B cell (primary cell): ENCODE measurements at regions of chr17 and their contacts with region 1.

Region 1: GRCh38 chr17:44210342-44211192 is 8.9 kb downstream of the UBTF start:
- DNase-seq: peak; percentile 93
- ATAC-seq: peak; percentile 98
- H3K4me3 ChIP-seq: no peak overlapping the region
- H3K4me3 Mint-ChIP-seq: peak overlapping the region; percentile 34
- H3K27ac ChIP-seq: peak overlapping the region; percentile 41 to 71
- H3K27ac Mint-ChIP-seq: peak overlapping the region; percentile 74
- H3K4me1 ChIP-seq: peaks cover 29 to 49% of the 10 kb centered on the region in 2 donors
- H3K4me1 Mint-ChIP-seq: peaks cover 46% of the 10 kb centered on the region
- H3K27me3 ChIP-seq: no peaks in the 10 kb centered on the region
- H3K27me3 Mint-ChIP-seq: no peaks in the 10 kb centered on the region
- CTCF ChIP-seq: peak; percentile 99

Region 2: GRCh38 chr17:44123356-44124117 is 87.0 kb before region 1 on chr17 and contains the start of gene HDAC5:
- CTCF ChIA-PET with region 1: interaction called, 10 read pairs
- POLR2A ChIA-PET with region 1: no interaction called
- intact Hi-C with region 1: no loop called
- DNase-seq: peak; percentile 95
- ATAC-seq: peak; percentile 97
- H3K4me3 ChIP-seq: peak within 1 kb of the TSS; percentile 71 to 98 (median 85)
- H3K4me3 Mint-ChIP-seq: peak within 1 kb of the TSS; percentile 95
- H3K27ac ChIP-seq: peak within 1 kb of the TSS; percentile 43 to 90
- H3K27ac Mint-ChIP-seq: peak within 1 kb of the TSS; percentile 99
- H3K4me1 ChIP-seq: peaks cover 18 to 26% of the 10 kb centered on the region in 2 donors
- H3K4me1 Mint-ChIP-seq: peaks cover 45% of the 10 kb centered on the region
- H3K27me3 ChIP-seq: no peaks in the 10 kb centered on the region
- H3K27me3 Mint-ChIP-seq: no peaks in the 10 kb centered on the region
- CTCF ChIP-seq: peak; percentile 76
- total RNA-seq, gene HDAC5: 104 and 113 TPM in 2 replicates

Region 3: GRCh38 chr17:44199553-44200477 is 10.8 kb before region 1 on chr17 and contains the start of gene ATXN7L3:
- CTCF ChIA-PET with region 1: interaction called, 44 read pairs
- POLR2A ChIA-PET with region 1: interaction called, 100 read pairs
- intact Hi-C with region 1: loop called (anchors 1 kb)
- DNase-seq: peak; percentile 100
- ATAC-seq: peak; percentile 81
- H3K4me3 ChIP-seq: peak within 1 kb of the TSS; percentile 66 to 83 (median 81)
- H3K4me3 Mint-ChIP-seq: peak within 1 kb of the TSS; percentile 88
- H3K27ac ChIP-seq: peak within 1 kb of the TSS; percentile 89 to 90
- H3K27ac Mint-ChIP-seq: peak within 1 kb of the TSS; percentile 95
- H3K4me1 ChIP-seq: peaks cover 30 to 43% of the 10 kb centered on the region in 2 donors
- H3K4me1 Mint-ChIP-seq: peaks cover 46% of the 10 kb centered on the region
- H3K27me3 ChIP-seq: no peaks in the 10 kb centered on the region
- H3K27me3 Mint-ChIP-seq: no peaks in the 10 kb centered on the region
- CTCF ChIP-seq: no peak
- total RNA-seq, gene ATXN7L3: 107 and 119 TPM in 2 replicates

Region 4: GRCh38 chr17:44253006-44253405 is 42.4 kb after region 1 on chr17:
- CTCF ChIA-PET with region 1: no interaction called
- POLR2A ChIA-PET with region 1: no interaction called
- intact Hi-C with region 1: no loop called
- DNase-seq: no peak
- ATAC-seq: no peak
- H3K4me3 ChIP-seq: no peak overlapping the region
- H3K4me3 Mint-ChIP-seq: no peak overlapping the region
- H3K27ac ChIP-seq: no peak overlapping the region
- H3K27ac Mint-ChIP-seq: no peak overlapping the region
- H3K4me1 ChIP-seq: peaks cover 6 to 12% of the 10 kb centered on the region in 2 donors
- H3K4me1 Mint-ChIP-seq: peaks cover 9% of the 10 kb centered on the region
- H3K27me3 ChIP-seq: peaks cover 0 to 3% (median 0%) of the 10 kb centered on the region in 4 experiments
- H3K27me3 Mint-ChIP-seq: peaks cover 6% of the 10 kb centered on the region
- CTCF ChIP-seq: no peak

Region 5: DNA sequence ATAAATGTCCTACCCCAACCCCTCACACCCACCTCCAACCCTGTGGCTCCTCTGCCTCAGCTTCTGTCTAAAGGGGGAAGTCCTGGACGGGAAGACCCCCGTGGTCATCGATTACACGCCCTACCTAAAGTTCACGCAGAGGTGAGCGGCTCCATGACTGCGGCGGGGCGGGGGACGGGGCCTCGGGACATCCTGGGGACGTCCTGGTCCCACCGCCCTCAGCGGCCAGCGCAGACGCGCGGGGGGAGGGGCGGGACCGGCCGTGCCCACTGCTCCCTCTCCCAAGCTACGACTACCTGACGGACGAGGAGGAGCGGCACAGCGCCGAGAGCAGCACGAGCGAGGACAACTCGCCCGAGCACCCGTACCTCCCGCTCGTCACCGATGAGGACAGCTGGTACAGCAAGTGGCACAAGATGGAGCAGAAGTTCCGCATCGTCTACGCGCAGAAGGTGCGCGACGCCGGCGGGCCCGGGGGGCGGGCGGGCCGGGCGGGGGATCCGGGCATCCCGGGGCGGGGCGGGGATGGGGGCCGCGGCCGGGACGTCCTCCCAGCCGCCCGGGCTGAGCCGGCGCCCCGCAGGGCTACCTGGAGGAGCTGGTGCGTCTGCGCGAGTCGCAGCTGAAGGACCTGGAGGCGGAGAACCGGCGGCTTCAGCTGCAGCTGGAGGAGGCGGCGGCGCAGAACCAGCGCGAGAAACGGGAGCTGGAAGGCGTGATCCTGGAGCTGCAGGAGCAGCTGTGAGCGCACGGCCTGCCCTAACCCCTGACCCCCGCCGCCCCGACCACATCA is 104.5 kb after region 1 on chr17:
- CTCF ChIA-PET with region 1: interaction called, 38 read pairs
- POLR2A ChIA-PET with region 1: no interaction called
- intact Hi-C with region 1: no loop called
- DNase-seq: peak; percentile 55
- ATAC-seq: peak; percentile 59
- H3K4me3 ChIP-seq: peak overlapping the region in 4 of 5 experiments; percentile 28 to 62 (median 50)
- H3K4me3 Mint-ChIP-seq: peak overlapping the region; percentile 80
- H3K27ac ChIP-seq: no peak overlapping the region
- H3K27ac Mint-ChIP-seq: peak overlapping the region; percentile 34
- H3K4me1 ChIP-seq: peaks cover 19 to 25% of the 10 kb centered on the region in 2 donors
- H3K4me1 Mint-ChIP-seq: peaks cover 18% of the 10 kb centered on the region
- H3K27me3 ChIP-seq: peaks cover 0 to 46% (median 22%) of the 10 kb centered on the region in 4 experiments
- H3K27me3 Mint-ChIP-seq: peaks cover 37% of the 10 kb centered on the region
- CTCF ChIP-seq: no peak

Region 6: DNA sequence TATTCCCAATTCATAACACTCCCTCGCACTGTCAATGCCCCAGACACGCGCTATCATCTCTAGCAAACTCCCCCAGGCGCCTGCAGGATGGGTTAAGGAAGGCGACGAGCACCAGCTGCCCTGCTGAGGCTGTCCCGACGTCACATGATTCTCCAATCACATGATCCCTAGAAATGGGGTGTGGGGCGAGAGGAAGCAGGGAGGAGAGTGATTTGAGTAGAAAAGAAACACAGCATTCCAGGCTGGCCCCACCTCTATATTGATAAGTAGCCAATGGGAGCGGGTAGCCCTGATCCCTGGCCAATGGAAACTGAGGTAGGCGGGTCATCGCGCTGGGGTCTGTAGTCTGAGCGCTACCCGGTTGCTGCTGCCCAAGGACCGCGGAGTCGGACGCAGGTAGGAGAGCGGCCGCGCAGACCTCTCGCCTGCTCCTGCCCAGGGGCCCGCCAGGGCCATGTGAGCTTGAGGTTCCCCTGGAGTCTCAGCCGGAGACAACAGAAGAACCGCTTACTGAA is 134.4 kb after region 1 on chr17 and contains the start of gene GRN:
- CTCF ChIA-PET with region 1: interaction called, 98 read pairs
- POLR2A ChIA-PET with region 1: interaction called, 10 read pairs
- intact Hi-C with region 1: loop called (anchors 1 kb)
- DNase-seq: peak; percentile 91
- ATAC-seq: peak; percentile 76
- H3K4me3 ChIP-seq: peak within 1 kb of the TSS; percentile 61 to 94 (median 91)
- H3K4me3 Mint-ChIP-seq: peak within 1 kb of the TSS; percentile 96
- H3K27ac ChIP-seq: peak within 1 kb of the TSS; percentile 85 to 89
- H3K27ac Mint-ChIP-seq: peak within 1 kb of the TSS; percentile 90
- H3K4me1 ChIP-seq: peaks cover 37 to 52% of the 10 kb centered on the region in 2 donors
- H3K4me1 Mint-ChIP-seq: peaks cover 45% of the 10 kb centered on the region
- H3K27me3 ChIP-seq: no peaks in the 10 kb centered on the region
- H3K27me3 Mint-ChIP-seq: no peaks in the 10 kb centered on the region
- CTCF ChIP-seq: no peak
- total RNA-seq, gene GRN: 185 and 187 TPM in 2 replicates

Region 7: GRCh38 chr17:44350733-44351226 is 140.2 kb after region 1 on chr17:
- CTCF ChIA-PET with region 1: interaction called, 98 read pairs
- POLR2A ChIA-PET with region 1: interaction called, 10 read pairs
- intact Hi-C with region 1: loop called (anchors 1 kb)
- DNase-seq: peak; percentile 83
- ATAC-seq: peak; percentile 41
- H3K4me3 ChIP-seq: no peak overlapping the region
- H3K4me3 Mint-ChIP-seq: peak overlapping the region; percentile 35
- H3K27ac ChIP-seq: no peak overlapping the region
- H3K27ac Mint-ChIP-seq: peak overlapping the region; percentile 58
- H3K4me1 ChIP-seq: peaks cover 40 to 46% of the 10 kb centered on the region in 2 donors
- H3K4me1 Mint-ChIP-seq: peaks cover 38% of the 10 kb centered on the region
- H3K27me3 ChIP-seq: no peaks in the 10 kb centered on the region
- H3K27me3 Mint-ChIP-seq: no peaks in the 10 kb centered on the region
- CTCF ChIP-seq: peak; percentile 85

Region 8: DNA sequence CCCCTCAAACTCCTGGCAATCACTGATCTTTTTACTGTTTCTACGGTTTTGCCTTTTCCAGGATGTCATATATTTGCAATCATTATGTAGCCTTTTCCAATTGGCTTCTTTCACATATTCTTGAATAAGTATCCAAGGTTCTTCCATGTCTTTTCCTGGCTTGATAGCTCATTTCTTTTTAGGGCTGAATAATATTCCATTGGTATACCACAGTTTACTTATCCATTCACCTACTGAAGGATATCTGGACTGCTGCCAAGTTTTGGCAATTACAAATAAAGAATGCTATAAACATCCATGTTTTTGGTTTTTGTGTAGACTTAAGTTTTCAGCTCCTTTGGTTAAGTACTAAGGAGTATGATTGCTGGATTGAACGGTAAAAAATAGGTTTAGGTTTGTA is 276.6 kb after region 1 on chr17:
- CTCF ChIA-PET with region 1: no interaction called
- POLR2A ChIA-PET with region 1: no interaction called
- intact Hi-C with region 1: no loop called
- DNase-seq: no peak
- ATAC-seq: no peak
- H3K4me3 ChIP-seq: no peak overlapping the region
- H3K4me3 Mint-ChIP-seq: no peak overlapping the region
- H3K27ac ChIP-seq: no peak overlapping the region
- H3K27ac Mint-ChIP-seq: no peak overlapping the region
- H3K4me1 ChIP-seq: peaks cover 0 to 3% of the 10 kb centered on the region in 2 donors
- H3K4me1 Mint-ChIP-seq: peaks cover 23% of the 10 kb centered on the region
- H3K27me3 ChIP-seq: no peaks in the 10 kb centered on the region
- H3K27me3 Mint-ChIP-seq: no peaks in the 10 kb centered on the region
- CTCF ChIP-seq: no peak